ENCODE measurements at regions of chr19 and their contacts with region 1.

Region 1: GRCh38 chr19:7562646-7563393 is 27.3 kb downstream of the PNPLA6 start:
- DNase-seq: no peak
- ATAC-seq: peak; percentile 48; the same call in 1 of the 2 replicates
- H3K4me3 ChIP-seq: no peak overlapping the region
- H3K27ac ChIP-seq: no peak overlapping the region
- H3K4me1 ChIP-seq: no peaks in the 10 kb centered on the region
- H3K27me3 ChIP-seq: no peaks in the 10 kb centered on the region
- CTCF ChIP-seq: no peak
- POLR2A ChIP-seq: no peak
- RAD21 ChIP-seq: no peak

Region 2: DNA sequence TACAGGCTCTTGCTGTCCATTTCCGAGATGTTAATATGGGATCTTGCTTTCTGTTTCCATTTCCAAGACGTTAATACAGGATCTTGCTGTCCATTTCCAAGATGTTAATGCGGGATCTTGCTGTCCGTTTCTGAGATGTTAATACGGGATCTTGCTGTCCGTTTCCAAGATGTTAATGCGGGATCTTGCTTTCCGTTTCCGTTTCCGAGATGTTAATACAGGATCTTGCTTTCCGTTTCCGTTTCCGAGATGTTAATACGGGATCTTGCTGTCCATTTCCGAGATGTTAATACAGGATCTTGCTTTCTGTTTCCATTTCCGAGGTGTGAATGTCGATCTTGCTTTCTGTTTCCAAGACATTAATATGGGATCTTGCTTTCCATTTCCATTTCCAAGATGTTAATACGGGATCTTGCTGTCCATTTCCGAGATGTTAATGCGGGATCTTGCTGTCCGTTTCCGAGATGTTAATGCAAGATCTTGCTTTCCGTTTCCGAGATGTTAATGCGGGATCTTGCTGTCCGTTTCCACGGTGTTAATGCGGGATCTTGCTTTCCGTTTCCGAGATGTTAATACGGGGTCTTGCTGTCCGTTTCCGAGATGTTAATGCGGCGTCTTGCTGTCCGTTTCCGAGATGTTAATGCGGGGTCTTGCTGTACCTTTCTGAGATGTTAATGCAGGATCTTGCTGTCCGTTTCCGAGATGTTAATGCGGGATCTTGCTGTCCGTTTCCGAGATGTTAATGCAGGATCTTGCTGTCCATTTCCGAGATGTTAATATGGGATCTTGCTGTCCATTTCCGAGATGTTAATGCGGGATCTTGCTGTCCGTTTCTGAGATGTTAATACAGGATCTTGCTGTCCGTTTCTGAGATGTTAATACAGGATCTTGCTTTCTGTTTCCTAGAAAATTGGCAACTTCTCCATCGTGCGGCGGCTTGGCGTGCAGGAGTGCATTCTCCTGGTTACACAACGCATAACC is 112.3 kb before region 1 on chr19:
- CTCF ChIA-PET with region 1: no interaction called
- POLR2A ChIA-PET with region 1: no interaction called
- dilution Hi-C with region 1: no loop called
- in situ Hi-C with region 1: no loop called
- intact Hi-C with region 1: no loop called
- DNase-seq: peak; percentile 63
- ATAC-seq: no peak
- H3K4me3 ChIP-seq: no peak overlapping the region
- H3K27ac ChIP-seq: no peak overlapping the region
- H3K4me1 ChIP-seq: no peaks in the 10 kb centered on the region
- H3K27me3 ChIP-seq: no peaks in the 10 kb centered on the region
- CTCF ChIP-seq: no peak
- POLR2A ChIP-seq: no peak
- RAD21 ChIP-seq: no peak

Region 3: GRCh38 chr19:7578127-7578526 is 15.3 kb after region 1 on chr19:
- CTCF ChIA-PET with region 1: interaction called, 10 read pairs
- POLR2A ChIA-PET with region 1: no interaction called
- dilution Hi-C with region 1: no loop called
- in situ Hi-C with region 1: no loop called
- intact Hi-C with region 1: no loop called
- DNase-seq: no peak
- ATAC-seq: no peak
- H3K4me3 ChIP-seq: no peak overlapping the region
- H3K27ac ChIP-seq: no peak overlapping the region
- H3K4me1 ChIP-seq: no peaks in the 10 kb centered on the region
- H3K27me3 ChIP-seq: peaks cover 7% of the 10 kb centered on the region
- CTCF ChIP-seq: no peak
- POLR2A ChIP-seq: no peak
- RAD21 ChIP-seq: no peak

Region 4: GRCh38 chr19:7645163-7645562 is 82.3 kb after region 1 on chr19:
- CTCF ChIA-PET with region 1: no interaction called
- POLR2A ChIA-PET with region 1: no interaction called
- dilution Hi-C with region 1: no loop called
- in situ Hi-C with region 1: no loop called
- intact Hi-C with region 1: no loop called
- DNase-seq: no peak
- ATAC-seq: no peak
- H3K4me3 ChIP-seq: no peak overlapping the region
- H3K27ac ChIP-seq: no peak overlapping the region
- H3K4me1 ChIP-seq: no peaks in the 10 kb centered on the region
- H3K27me3 ChIP-seq: peaks cover 3% of the 10 kb centered on the region; the same call in 1 of the 2 replicates
- CTCF ChIP-seq: no peak
- POLR2A ChIP-seq: no peak
- RAD21 ChIP-seq: no peak

Measured in IMR-90 (cell line).